Calu3 (cell line): ENCODE measurements at regions of chr16 and their contacts with region 1.

Region 1: GRCh38 chr16:5045499-5046115 is 11.9 kb upstream of the NAGPA start:
- DNase-seq: no peak
- H3K4me3 Mint-ChIP-seq: no peak overlapping the region
- H3K27ac Mint-ChIP-seq: no peak overlapping the region
- H3K4me1 Mint-ChIP-seq: no peaks in the 10 kb centered on the region
- H3K27me3 Mint-ChIP-seq: peaks cover 94% of the 10 kb centered on the region
- CTCF ChIP-seq: no peak

Region 2: GRCh38 chr16:5349670-5350517 is 304.3 kb after region 1 on chr16:
- CTCF ChIA-PET with region 1: no interaction called
- intact Hi-C with region 1: loop called (anchors 5 kb)
- DNase-seq: no peak
- H3K4me3 Mint-ChIP-seq: no peak overlapping the region
- H3K27ac Mint-ChIP-seq: no peak overlapping the region
- H3K4me1 Mint-ChIP-seq: no peaks in the 10 kb centered on the region
- H3K27me3 Mint-ChIP-seq: peaks cover 44% of the 10 kb centered on the region
- CTCF ChIP-seq: no peak